Dorsolateral prefrontal cortex (tissue), 120 donors: ENCODE measurements at regions of chr1 and their contacts with region 1.

Region 1: GRCh38 chr1:168637350-168637991 is 61.1 kb downstream of the XCL1 start:
- DNase-seq: no peak
- H3K4me3 ChIP-seq: no peak overlapping the region
- H3K27ac ChIP-seq: peak overlapping the region in 46 of 59 donors; percentile 0 to 84 (median 64)
- H3K27me3 ChIP-seq: no peaks in the 10 kb centered on the region
- CTCF ChIP-seq: peak; percentile 43 to 83 (median 64)

Region 2: GRCh38 chr1:168504064-168504837 is 133.2 kb before region 1 on chr1:
- intact Hi-C with region 1: no loop called
- DNase-seq: peak in 2 of 10 donors; percentile 5 to 30
- H3K4me3 ChIP-seq: no peak overlapping the region
- H3K27ac ChIP-seq: no peak overlapping the region
- H3K27me3 ChIP-seq: no peaks in the 10 kb centered on the region
- CTCF ChIP-seq: no peak

Region 3: GRCh38 chr1:168673974-168674683 is 36.7 kb after region 1 on chr1:
- intact Hi-C with region 1: loop called in 1 of 2 experiments (anchors 5 kb)
- DNase-seq: peak in 2 of 10 donors; percentile 12 to 47
- H3K4me3 ChIP-seq: no peak overlapping the region
- H3K27ac ChIP-seq: peak overlapping the region in 12 of 59 donors; percentile 2 to 69 (median 34)
- H3K27me3 ChIP-seq: no peaks in the 10 kb centered on the region
- CTCF ChIP-seq: no peak

Region 4: DNA sequence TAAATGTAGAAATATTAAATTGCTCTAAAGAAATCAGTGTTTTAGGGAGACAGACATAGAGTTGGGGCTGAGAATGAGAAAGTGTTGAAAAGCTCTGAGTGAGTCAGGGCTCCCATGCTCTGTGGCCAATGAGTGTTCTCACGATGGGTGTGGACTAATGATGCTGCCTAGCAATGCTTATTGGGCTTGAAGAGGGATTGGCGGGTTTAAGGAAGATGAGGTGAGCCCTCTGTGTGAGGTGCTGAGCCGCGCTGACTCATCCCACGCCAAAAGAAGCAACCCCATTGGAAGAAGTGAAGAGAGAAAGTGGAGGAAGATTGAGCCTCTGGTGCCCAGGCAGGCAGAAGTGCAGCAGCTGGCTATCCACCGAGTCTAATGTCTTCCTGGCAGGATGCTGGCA is 156.6 kb after region 1 on chr1:
- intact Hi-C with region 1: loop called in 1 of 2 experiments (anchors 10 kb)
- DNase-seq: no peak
- H3K4me3 ChIP-seq: no peak overlapping the region
- H3K27ac ChIP-seq: no peak overlapping the region
- H3K27me3 ChIP-seq: no peaks in the 10 kb centered on the region
- CTCF ChIP-seq: no peak

Region 5: DNA sequence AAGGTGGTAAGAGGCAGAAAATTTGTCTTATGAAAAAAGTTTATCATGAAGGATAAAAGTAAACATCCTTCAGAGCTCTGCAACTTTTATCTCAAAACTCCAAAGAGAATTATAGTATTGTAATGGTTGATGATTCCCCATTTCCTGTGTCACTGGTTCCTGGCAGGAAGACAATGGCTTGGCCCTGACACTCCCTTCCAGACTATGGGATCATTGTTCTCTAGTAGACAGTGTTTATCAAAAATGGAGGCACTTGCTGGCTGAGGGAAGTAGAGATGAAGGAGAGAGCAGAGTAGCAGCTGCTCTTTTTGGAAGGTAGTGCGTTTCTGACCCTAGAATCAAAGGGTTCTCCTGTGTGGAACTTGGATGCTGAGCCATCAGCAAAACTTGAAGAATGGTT is 323.1 kb after region 1 on chr1:
- intact Hi-C with region 1: loop called in 1 of 2 experiments (anchors 5 kb)
- DNase-seq: peak in 7 of 10 donors; percentile 38 to 74 (median 53)
- H3K4me3 ChIP-seq: peak overlapping the region in 12 of 59 donors; percentile 6 to 35 (median 15)
- H3K27ac ChIP-seq: peak overlapping the region in 51 of 59 donors; percentile 12 to 88 (median 62)
- H3K27me3 ChIP-seq: no peaks in the 10 kb centered on the region
- CTCF ChIP-seq: peak in 6 of 56 donors; percentile 11 to 28 (median 16)

Region 6: GRCh38 chr1:169133801-169134502 is 496.5 kb after region 1 on chr1:
- intact Hi-C with region 1: loop called in 1 of 2 experiments (anchors 5 kb)
- DNase-seq: no peak
- H3K4me3 ChIP-seq: no peak overlapping the region
- H3K27ac ChIP-seq: peak overlapping the region in 49 of 59 donors; percentile 1 to 84 (median 60)
- H3K27me3 ChIP-seq: no peaks in the 10 kb centered on the region
- CTCF ChIP-seq: peak in 55 of 56 donors; percentile 15 to 81 (median 57)